ENCODE measurements at regions of chrX and their contacts with region 1.

Region 1: DNA sequence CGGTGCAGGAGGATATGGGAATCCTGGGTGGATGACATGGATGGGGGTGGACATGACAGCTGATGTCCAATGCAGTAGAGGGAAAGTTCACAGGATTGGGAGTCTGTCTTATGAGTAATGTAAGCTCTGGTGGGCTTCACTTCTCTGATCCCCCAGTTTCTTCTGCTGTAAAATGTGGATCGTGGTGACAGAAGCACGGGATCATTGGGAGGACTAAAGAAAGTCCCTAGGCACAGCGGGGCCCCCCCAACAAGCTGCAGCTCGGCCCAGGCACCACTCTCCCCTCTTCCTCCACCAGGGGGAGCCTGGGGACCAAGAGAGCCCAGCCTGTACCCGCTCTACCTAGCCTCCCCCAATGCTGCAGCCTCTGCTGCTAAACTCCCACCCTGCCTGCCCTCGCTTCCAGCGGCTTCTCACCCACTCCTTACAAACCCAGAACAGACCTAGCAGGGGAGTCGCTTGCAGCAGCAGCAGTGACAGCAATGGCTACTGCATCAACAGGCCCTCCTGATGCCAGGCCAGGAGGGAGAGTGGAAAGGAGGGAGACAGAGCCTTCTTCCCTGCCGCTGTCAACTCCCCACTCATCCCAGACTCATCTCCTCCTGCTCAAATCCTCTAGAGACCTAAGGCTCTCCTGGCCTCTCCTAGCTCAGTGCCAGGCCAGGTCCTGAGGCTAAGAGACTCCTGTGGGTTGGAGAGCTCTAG is 36.1 kb upstream of the IQSEC2 start:
- DNase-seq: peak; percentile 72
- H3K4me3 ChIP-seq: no peak overlapping the region
- H3K27ac ChIP-seq: no peak overlapping the region
- H3K4me1 ChIP-seq: peaks cover 0 to 20% (median 12%) of the 10 kb centered on the region in 4 donors
- H3K27me3 ChIP-seq: peaks cover 30% of the 10 kb centered on the region
- CTCF ChIP-seq: peak; percentile 53 to 83 (median 68)
- EP300 ChIP-seq: no peak
- POLR2A ChIP-seq: no peak

Region 2: GRCh38 chrX:53357799-53358530 is 40.4 kb after region 1 on chrX:
- in situ Hi-C with region 1: no loop called
- intact Hi-C with region 1: loop called (anchors 1 kb)
- DNase-seq: no peak
- H3K4me3 ChIP-seq: no peak overlapping the region
- H3K27ac ChIP-seq: no peak overlapping the region
- H3K4me1 ChIP-seq: no peaks in the 10 kb centered on the region
- H3K27me3 ChIP-seq: no peaks in the 10 kb centered on the region
- CTCF ChIP-seq: no peak
- EP300 ChIP-seq: no peak
- POLR2A ChIP-seq: no peak

Region 3: DNA sequence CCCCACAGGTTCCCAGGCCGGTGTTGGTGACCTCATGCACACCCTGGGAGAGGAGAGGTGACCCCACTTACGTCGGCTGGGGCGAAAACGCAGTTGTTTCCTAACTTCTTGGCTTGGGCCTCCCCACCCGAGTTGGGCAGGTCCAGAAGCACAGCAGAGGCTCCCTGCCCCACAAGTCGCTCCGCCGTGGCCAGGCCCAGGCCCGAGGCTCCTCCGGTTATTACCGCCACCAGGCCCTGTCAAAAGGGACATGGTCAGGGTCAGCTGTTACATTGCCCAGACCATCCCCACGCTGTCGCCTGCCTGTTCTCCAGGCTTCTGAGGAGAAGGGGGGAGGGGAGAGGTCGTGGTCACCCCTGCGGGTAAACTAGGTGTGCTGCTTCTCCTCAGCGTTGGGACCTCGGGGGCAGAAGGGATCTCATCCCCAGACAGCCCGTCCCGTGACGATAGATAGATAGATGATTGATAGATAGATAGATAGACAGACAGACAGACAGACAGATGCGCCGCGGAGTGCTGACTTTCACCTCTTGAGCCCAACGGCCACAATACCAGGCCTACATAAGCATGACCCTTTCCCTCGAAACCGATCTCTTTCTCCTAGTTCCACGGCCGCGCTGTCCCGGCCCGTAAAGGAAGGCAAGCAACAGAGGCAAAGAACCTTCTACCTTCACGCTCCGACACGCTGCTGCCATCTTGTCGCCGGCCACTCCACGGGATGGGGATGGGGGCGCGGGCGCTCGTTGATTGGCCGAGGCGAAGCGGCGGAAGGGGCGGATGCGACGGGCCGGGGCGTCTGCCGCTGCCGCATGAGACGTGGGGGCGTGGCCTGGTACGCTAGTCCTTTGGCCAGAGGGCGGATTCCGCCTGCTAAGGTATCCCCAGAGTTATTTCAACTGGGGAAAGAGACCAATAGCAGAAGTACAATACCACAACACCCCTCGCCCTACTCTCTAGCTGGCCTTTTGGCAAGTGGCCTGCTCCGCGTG is 116.4 kb after region 1 on chrX and contains the start of gene HSD17B10:
- in situ Hi-C with region 1: loop called in 1 of 4 experiments (anchors 25 kb)
- intact Hi-C with region 1: loop called (anchors 10 kb)
- DNase-seq: peak; percentile 92
- H3K4me3 ChIP-seq: peak within 1 kb of the TSS; percentile 18 to 69 (median 48)
- H3K27ac ChIP-seq: peak within 1 kb of the TSS; percentile 66 to 86 (median 79)
- H3K4me1 ChIP-seq: peaks cover 0 to 9% (median 6%) of the 10 kb centered on the region in 4 donors
- H3K27me3 ChIP-seq: no peaks in the 10 kb centered on the region
- CTCF ChIP-seq: no peak
- EP300 ChIP-seq: no peak
- POLR2A ChIP-seq: peak; percentile 48
- total RNA-seq, gene HSD17B10: 12.5 to 47.5 (median 42.2) TPM

Region 4: GRCh38 chrX:53441531-53442321 is 124.2 kb after region 1 on chrX:
- in situ Hi-C with region 1: loop called in 2 of 4 experiments (anchors 10 to 25 kb)
- intact Hi-C with region 1: loop called (anchors 10 kb)
- DNase-seq: peak; percentile 87
- H3K4me3 ChIP-seq: peak overlapping the region in 3 of 4 donors; percentile 27 to 40 (median 30)
- H3K27ac ChIP-seq: peak overlapping the region; percentile 78 to 86 (median 82)
- H3K4me1 ChIP-seq: peaks cover 0 to 13% (median 2%) of the 10 kb centered on the region in 4 donors
- H3K27me3 ChIP-seq: no peaks in the 10 kb centered on the region
- CTCF ChIP-seq: no peak
- EP300 ChIP-seq: no peak
- POLR2A ChIP-seq: peak; percentile 40

Region 5: DNA sequence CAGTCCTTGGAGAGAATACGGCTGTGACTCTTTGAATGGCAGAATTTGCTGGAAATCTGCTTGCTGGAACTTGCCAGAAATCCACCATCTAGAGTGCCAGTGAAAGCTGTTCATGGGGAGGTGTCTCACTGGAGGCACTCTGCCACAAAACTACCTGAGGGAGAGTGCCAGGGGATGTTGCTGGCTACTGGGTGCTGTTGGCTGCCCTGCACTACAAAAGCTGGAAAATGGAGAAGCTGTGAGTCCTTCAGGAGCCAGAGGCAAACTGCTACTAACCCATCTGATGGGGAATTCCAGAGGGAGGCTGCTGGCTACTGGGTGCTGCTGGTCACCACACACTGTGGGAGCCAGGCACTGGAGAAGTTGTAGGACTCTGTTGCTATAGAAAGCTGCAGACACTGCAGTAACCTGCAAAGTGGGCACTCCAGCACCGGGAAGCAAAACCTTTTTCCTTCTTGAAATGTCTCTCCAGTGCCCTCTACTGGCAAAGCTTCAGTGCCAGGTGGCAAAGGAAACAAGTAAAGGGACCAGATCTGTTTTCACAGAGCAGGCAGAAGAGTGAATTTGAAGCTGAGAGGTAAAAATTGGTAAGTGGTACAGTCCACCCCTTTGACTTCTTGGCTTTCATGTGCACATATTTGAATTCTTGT is 164.4 kb after region 1 on chrX:
- in situ Hi-C with region 1: loop called in 1 of 4 experiments (anchors 25 kb)
- intact Hi-C with region 1: no loop called
- DNase-seq: peak; percentile 66
- H3K4me3 ChIP-seq: no peak overlapping the region
- H3K27ac ChIP-seq: no peak overlapping the region
- H3K4me1 ChIP-seq: no peaks in the 10 kb centered on the region
- H3K27me3 ChIP-seq: no peaks in the 10 kb centered on the region
- CTCF ChIP-seq: peak; percentile 34 to 60 (median 55)
- EP300 ChIP-seq: no peak
- POLR2A ChIP-seq: no peak

Region 6: GRCh38 chrX:54407266-54407665 is 1089.7 kb after region 1 on chrX:
- in situ Hi-C with region 1: no loop called
- intact Hi-C with region 1: no loop called
- DNase-seq: no peak
- H3K4me3 ChIP-seq: no peak overlapping the region
- H3K27ac ChIP-seq: no peak overlapping the region
- H3K4me1 ChIP-seq: no peaks in the 10 kb centered on the region
- H3K27me3 ChIP-seq: no peaks in the 10 kb centered on the region
- CTCF ChIP-seq: no peak
- EP300 ChIP-seq: no peak
- POLR2A ChIP-seq: no peak